ENCODE measurements at regions of chr22 and their contacts with region 1.

Region 1: DNA sequence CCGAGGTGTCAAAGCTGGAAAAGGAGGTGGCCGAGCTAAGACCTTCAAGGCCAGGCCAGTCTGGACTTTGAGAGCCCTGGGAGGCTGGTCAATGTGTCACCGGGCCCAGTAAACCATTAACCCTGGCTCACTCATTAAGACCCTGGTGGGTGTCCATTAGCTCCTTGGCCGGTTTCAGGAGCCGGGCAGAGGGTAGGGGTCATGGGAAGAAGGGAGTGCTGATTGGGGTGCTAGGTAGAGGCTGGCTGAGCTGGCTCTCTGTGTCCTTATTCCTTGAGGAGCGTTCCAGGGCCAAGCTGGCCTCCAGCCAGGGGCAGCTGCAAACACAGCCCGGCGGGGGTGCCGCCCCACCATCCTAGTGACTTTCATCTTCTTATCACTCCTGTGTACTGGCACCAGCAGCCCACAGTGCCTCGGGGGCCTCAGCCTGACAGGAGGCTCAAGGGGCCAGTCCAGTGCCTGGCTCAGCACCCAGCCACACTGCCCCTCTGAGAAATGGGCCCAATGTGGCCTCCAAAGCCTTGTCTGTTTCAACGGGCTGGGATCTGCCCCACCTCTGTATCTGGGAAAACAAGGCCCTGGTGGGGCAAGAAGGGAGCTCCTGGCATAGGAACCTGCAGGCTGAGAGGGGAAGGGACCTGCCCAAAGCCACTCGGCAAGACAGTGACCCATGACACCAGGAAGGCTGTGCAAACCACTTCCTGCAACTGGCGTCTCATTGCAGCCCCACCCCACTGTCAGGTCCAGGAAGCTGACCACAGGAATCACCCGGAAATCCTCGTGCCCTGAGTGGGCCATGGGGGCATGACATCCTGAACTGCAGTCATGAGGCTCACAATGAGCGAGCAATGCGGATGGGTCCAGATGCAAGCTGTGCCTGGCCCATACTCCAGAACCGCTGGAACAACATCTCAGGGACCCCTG is 15.1 kb upstream of the RGL4 start:
- DNase-seq: no peak
- ATAC-seq: peak; percentile 80
- H3K4me3 ChIP-seq: no peak overlapping the region
- H3K4me3 Mint-ChIP-seq: no peak overlapping the region
- H3K27ac ChIP-seq: no peak overlapping the region
- H3K27ac Mint-ChIP-seq: no peak overlapping the region
- H3K4me1 ChIP-seq: peaks cover 0 to 9% of the 10 kb centered on the region in 2 donors
- H3K4me1 Mint-ChIP-seq: peaks cover 0 to 29% (median 8%) of the 10 kb centered on the region in 7 donors
- H3K27me3 ChIP-seq: no peaks in the 10 kb centered on the region
- H3K27me3 Mint-ChIP-seq: no peaks in the 10 kb centered on the region

Region 2: GRCh38 chr22:23655891-23656475 is 19.8 kb before region 1 on chr22:
- CTCF ChIA-PET with region 1: no interaction called
- POLR2A ChIA-PET with region 1: interaction called, 7 read pairs
- intact Hi-C with region 1: loop called in 1 of 2 experiments (anchors 2 kb)
- DNase-seq: no peak
- ATAC-seq: no peak
- H3K4me3 ChIP-seq: no peak overlapping the region
- H3K4me3 Mint-ChIP-seq: no peak overlapping the region
- H3K27ac ChIP-seq: no peak overlapping the region
- H3K27ac Mint-ChIP-seq: peak overlapping the region in 3 of 9 donors; percentile 36 to 81 (median 51)
- H3K4me1 ChIP-seq: no peaks in the 10 kb centered on the region
- H3K4me1 Mint-ChIP-seq: no peaks in the 10 kb centered on the region
- H3K27me3 ChIP-seq: no peaks in the 10 kb centered on the region
- H3K27me3 Mint-ChIP-seq: no peaks in the 10 kb centered on the region

Region 3: GRCh38 chr22:24601217-24602104 is 925.7 kb after region 1 on chr22:
- CTCF ChIA-PET with region 1: no interaction called
- POLR2A ChIA-PET with region 1: interaction called, 3 read pairs
- intact Hi-C with region 1: loop called in 1 of 2 experiments (anchors 10 kb)
- DNase-seq: no peak
- ATAC-seq: peak; percentile 60
- H3K4me3 ChIP-seq: no peak overlapping the region
- H3K4me3 Mint-ChIP-seq: peak overlapping the region in 2 of 10 donors; percentile 28 to 58
- H3K27ac ChIP-seq: no peak overlapping the region
- H3K27ac Mint-ChIP-seq: peak overlapping the region in 2 of 9 donors; percentile 38 to 67
- H3K4me1 ChIP-seq: peaks cover 0 to 8% of the 10 kb centered on the region in 2 donors
- H3K4me1 Mint-ChIP-seq: peaks cover 14 to 40% (median 19%) of the 10 kb centered on the region in 7 donors
- H3K27me3 ChIP-seq: no peaks in the 10 kb centered on the region
- H3K27me3 Mint-ChIP-seq: no peaks in the 10 kb centered on the region

Measured in naive thymus-derived CD4-positive, alpha-beta T cell (primary cell).